H1 (cell line): ENCODE measurements at regions of chr16 and their contacts with region 1.

Region 1: GRCh38 chr16:68800257-68800875 is 43.0 kb upstream of the TANGO6 start:
- DNase-seq: peak; percentile 60 to 82
- H3K4me3 ChIP-seq: no peak overlapping the region
- H3K27ac ChIP-seq: no peak overlapping the region
- H3K4me1 ChIP-seq: peaks cover 4 to 11% (median 5%) of the 10 kb centered on the region in 4 experiments; a peak in 4 of 7 replicates
- H3K27me3 ChIP-seq: no peaks in the 10 kb centered on the region; a peak in 1 of 7 replicates
- CTCF ChIP-seq: peak; percentile 63 to 88 (median 80)
- EP300 ChIP-seq: no peak
- POLR2A ChIP-seq: no peak
- RAD21 ChIP-seq: peak; percentile 91 to 93

Region 2: DNA sequence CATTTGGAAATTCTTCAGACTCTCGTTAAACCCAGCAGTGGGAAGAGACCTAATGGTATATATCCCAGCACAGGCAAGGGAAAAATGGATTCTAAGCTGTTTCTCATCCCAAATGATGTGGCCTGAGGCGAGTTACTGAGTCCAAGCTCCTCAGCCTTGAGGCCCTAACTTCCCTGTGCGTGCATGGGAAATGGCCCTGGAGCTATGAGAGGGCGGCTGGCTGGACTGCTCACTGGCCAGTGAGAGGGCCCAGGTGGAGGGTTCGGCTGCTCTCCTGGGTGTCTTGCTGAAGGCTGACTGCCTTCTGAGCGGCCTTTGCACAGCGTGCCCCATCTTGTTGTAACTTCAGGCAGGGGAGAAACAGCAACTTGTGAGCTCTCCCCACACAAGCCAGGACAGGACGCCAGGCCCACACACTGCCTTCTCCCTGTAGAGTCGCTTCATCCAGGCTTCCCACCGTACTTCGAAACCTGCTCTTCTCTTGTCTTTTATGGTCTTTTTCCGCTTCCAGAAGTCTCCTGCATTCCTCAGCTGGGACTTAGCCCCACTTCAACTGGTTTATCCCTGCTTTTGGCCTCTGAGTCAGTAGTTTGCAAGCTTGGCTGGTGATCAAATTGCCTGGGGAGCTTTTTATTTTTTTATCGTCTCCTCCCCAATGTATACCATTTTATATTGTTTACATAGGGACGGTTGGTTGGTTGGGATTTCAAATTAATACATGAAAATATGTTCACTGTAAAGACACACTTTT is 141.9 kb before region 1 on chr16:
- CTCF ChIA-PET with region 1: no interaction called
- POLR2A ChIA-PET with region 1: no interaction called
- DNase-seq: no peak
- H3K4me3 ChIP-seq: no peak overlapping the region
- H3K27ac ChIP-seq: no peak overlapping the region
- H3K4me1 ChIP-seq: peaks cover 0 to 6% (median 0%) of the 10 kb centered on the region in 4 experiments; a peak in 1 of 7 replicates
- H3K27me3 ChIP-seq: no peaks in the 10 kb centered on the region
- CTCF ChIP-seq: no peak
- EP300 ChIP-seq: no peak
- POLR2A ChIP-seq: no peak
- RAD21 ChIP-seq: no peak

Region 3: DNA sequence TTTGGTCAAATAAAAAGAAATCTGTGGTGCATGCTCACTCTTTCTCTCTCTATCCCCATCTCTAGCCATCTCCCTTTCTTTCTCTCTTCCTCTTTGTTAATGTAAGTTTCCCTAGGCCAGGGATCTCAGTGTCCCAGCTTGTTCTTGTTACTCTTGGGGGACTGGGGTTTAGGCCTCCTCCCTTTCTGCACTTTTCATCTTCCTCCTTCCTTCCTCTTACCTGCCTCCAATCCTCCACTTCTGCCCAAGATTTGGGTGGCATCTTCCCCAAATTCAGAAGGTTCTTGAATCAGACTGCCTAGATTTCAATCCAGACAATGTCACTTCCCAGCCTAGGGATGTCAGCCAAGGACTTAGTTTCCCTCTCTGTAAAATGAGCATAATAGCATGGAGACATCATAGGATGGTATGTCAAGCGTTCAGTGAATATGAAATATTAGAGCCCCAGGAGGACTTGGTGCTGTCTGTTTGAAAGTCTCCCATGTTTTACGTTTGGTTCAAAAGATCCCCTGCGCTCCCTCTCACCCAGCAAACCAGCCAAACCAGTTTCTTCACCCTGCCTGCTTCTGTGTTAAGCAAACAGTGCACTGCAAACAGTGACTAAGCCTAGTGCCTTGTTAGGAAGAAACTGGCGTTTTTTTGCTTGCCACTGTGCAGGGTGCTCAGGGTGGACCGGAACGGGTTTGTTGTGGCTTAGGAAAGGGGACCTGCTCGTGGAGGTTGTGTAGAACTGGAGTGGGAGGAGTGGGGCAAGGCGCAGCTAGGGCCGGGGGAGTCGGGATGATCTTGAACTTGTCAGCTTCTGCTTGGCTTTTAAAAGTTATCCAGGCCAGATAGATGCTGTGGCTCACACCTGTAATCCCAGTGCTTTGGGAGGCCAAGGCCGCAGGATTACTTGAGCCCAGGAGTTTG is 55.7 kb before region 1 on chr16:
- CTCF ChIA-PET with region 1: interaction called, 13 read pairs
- POLR2A ChIA-PET with region 1: interaction called, 7 read pairs
- DNase-seq: peak in 1 of 2 experiments; percentile 63
- H3K4me3 ChIP-seq: peak overlapping the region in 3 of 4 experiments; percentile 5 to 39 (median 7); a peak in 5 of 8 replicates
- H3K27ac ChIP-seq: peak overlapping the region; percentile 63
- H3K4me1 ChIP-seq: peaks cover 8 to 29% (median 18%) of the 10 kb centered on the region in 4 experiments
- H3K27me3 ChIP-seq: no peaks in the 10 kb centered on the region
- CTCF ChIP-seq: no peak
- EP300 ChIP-seq: peak in 1 of 2 experiments; percentile 61; a peak in 1 of 3 replicates
- POLR2A ChIP-seq: no peak
- RAD21 ChIP-seq: 0 out of 4 replicates have a peak, but pooled peaks of 1 of the 2 experiments have one; percentile 18

Region 4: DNA sequence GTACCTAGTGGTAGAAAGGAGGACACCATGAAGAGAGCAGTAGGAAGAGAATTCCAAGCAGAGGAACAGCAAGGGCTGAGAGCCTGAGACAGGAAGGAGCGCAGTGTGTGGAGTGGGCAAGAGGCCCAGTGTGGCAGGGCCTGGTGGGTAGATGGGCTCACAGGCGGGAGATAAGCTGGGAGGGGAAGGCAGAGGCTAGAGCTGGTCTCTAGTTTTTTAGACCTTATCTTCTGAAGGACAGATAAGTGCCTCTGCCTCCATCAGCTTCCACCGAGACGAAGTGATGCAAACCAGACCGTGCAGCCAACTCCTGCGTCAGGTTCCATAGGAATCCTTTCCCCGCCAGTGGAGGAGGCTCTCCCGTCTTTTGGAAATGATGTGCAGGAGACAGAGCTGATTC is 29.7 kb before region 1 on chr16:
- CTCF ChIA-PET with region 1: interaction called, 21 read pairs
- POLR2A ChIA-PET with region 1: no interaction called
- DNase-seq: no peak
- H3K4me3 ChIP-seq: no peak overlapping the region
- H3K27ac ChIP-seq: no peak overlapping the region
- H3K4me1 ChIP-seq: no peaks in the 10 kb centered on the region; a peak in 1 of 7 replicates
- H3K27me3 ChIP-seq: no peaks in the 10 kb centered on the region
- CTCF ChIP-seq: no peak
- EP300 ChIP-seq: no peak
- POLR2A ChIP-seq: no peak
- RAD21 ChIP-seq: no peak

Region 5: GRCh38 chr16:68811503-68811902 is 11.1 kb after region 1 on chr16:
- CTCF ChIA-PET with region 1: interaction called, 17 read pairs
- POLR2A ChIA-PET with region 1: interaction called, 4 read pairs
- DNase-seq: no peak
- H3K4me3 ChIP-seq: no peak overlapping the region
- H3K27ac ChIP-seq: no peak overlapping the region
- H3K4me1 ChIP-seq: no peaks in the 10 kb centered on the region
- H3K27me3 ChIP-seq: no peaks in the 10 kb centered on the region
- CTCF ChIP-seq: no peak
- EP300 ChIP-seq: no peak
- POLR2A ChIP-seq: no peak
- RAD21 ChIP-seq: no peak

Region 6: GRCh38 chr16:68851601-68852000 is 51.2 kb after region 1 on chr16:
- CTCF ChIA-PET with region 1: no interaction called
- POLR2A ChIA-PET with region 1: no interaction called
- DNase-seq: no peak
- H3K4me3 ChIP-seq: no peak overlapping the region
- H3K27ac ChIP-seq: no peak overlapping the region
- H3K4me1 ChIP-seq: no peaks in the 10 kb centered on the region
- H3K27me3 ChIP-seq: no peaks in the 10 kb centered on the region
- CTCF ChIP-seq: no peak
- EP300 ChIP-seq: no peak
- POLR2A ChIP-seq: no peak
- RAD21 ChIP-seq: no peak

Region 7: GRCh38 chr16:68910051-68910450 is 109.7 kb after region 1 on chr16:
- CTCF ChIA-PET with region 1: no interaction called
- POLR2A ChIA-PET with region 1: no interaction called
- DNase-seq: no peak
- H3K4me3 ChIP-seq: no peak overlapping the region
- H3K27ac ChIP-seq: no peak overlapping the region
- H3K4me1 ChIP-seq: peaks cover 0 to 2% (median under 1%) of the 10 kb centered on the region in 4 experiments; a peak in 2 of 7 replicates
- H3K27me3 ChIP-seq: no peaks in the 10 kb centered on the region
- CTCF ChIP-seq: no peak
- EP300 ChIP-seq: no peak
- POLR2A ChIP-seq: no peak
- RAD21 ChIP-seq: no peak